Transverse colon (tissue), 4 donors: ENCODE measurements at regions of chr19 and their contacts with region 1.

Region 1: GRCh38 chr19:32570081-32570785 is 10.8 kb upstream of the PDCD5 start:
- DNase-seq: peak; percentile 56
- H3K4me3 ChIP-seq: no peak overlapping the region
- H3K27ac ChIP-seq: no peak overlapping the region
- H3K4me1 ChIP-seq: no peaks in the 10 kb centered on the region
- H3K27me3 ChIP-seq: no peaks in the 10 kb centered on the region
- CTCF ChIP-seq: peak; percentile 53 to 69 (median 57)
- EP300 ChIP-seq: no peak
- POLR2A ChIP-seq: no peak

Region 2: DNA sequence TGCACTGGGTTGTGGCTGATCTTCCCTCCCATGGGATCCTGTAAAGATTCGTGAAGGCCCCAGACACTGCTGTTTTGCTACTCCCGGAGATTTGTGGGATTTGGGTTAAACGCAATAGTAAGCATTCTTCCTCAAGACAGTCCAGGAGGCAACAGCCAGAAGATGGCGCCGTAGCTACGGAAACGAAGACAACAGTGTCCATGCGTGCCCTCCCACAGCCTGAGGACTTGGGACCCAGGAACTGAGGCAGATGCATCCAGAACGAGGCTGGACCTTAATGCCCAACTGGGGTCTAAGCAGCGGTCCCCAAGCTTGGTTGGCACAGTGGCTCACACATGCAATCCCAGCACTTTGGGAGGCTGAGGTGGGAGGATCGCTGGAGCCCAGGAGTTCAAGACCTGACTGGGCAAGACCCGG is 282.4 kb before region 1 on chr19:
- in situ Hi-C with region 1: no loop called
- intact Hi-C with region 1: loop called (anchors 5 kb)
- DNase-seq: peak; percentile 74
- H3K4me3 ChIP-seq: peak overlapping the region in 1 of 4 donors; percentile 20
- H3K27ac ChIP-seq: no peak overlapping the region
- H3K4me1 ChIP-seq: peaks cover 0 to 7% (median 2%) of the 10 kb centered on the region in 4 donors
- H3K27me3 ChIP-seq: peaks cover 7% of the 10 kb centered on the region
- CTCF ChIP-seq: peak; percentile 38 to 52 (median 42)
- EP300 ChIP-seq: no peak
- POLR2A ChIP-seq: no peak

Region 3: GRCh38 chr19:32318880-32319520 is 251.2 kb before region 1 on chr19:
- in situ Hi-C with region 1: loop called in 3 of 4 experiments (anchors 25 kb)
- intact Hi-C with region 1: no loop called
- DNase-seq: no peak
- H3K4me3 ChIP-seq: no peak overlapping the region
- H3K27ac ChIP-seq: no peak overlapping the region
- H3K4me1 ChIP-seq: no peaks in the 10 kb centered on the region
- H3K27me3 ChIP-seq: no peaks in the 10 kb centered on the region
- CTCF ChIP-seq: peak in 4 of 5 experiments; percentile 14 to 19 (median 18)
- EP300 ChIP-seq: no peak
- POLR2A ChIP-seq: no peak

Region 4: DNA sequence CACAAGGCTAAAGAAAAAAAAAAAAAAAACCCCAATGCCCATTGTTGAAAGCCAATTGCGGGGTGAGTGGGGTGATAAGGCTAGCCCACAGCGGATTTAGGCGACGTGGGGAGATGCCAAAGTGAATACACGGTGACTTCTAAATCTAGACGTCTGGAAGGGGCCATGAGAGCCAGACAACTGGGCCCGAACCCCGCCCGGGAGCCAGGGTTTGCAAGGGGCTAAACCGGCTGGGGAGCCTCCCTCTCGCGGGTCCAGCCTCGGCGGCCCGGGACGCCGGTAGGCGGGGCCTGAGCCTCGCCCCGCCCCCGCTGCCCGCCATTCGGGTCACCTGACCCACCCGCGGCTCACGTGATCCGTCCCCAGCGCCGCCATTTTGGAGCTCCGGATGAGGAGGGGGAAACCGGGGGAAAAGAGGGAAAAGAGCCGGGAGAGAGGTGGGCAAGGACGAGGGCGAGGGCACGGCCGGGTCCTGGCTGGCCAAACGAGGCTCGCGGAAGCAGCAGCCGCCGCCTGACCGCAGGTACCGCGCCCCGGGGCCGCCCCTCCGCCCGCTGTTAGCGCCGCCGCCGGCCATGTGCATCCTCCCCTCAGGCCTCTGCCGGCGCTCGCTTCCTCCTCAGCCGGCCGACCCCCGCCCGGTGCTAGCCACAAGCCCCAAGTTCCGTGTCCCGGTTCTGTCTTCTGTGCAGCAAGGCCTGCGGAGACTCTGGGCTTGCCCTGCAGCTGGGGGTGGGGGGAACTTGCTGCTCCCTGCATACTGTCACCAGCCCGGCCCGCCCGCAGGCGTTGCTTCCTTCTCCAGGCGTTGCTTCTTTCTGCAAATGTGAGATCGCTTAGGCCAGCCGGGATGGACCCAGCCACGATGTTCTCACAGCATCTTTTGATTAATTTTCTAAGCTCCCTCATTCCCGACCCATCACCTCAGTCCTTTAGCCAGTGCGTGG is 224.7 kb before region 1 on chr19 and contains the start of gene ZNF507:
- in situ Hi-C with region 1: loop called in 1 of 4 experiments (anchors 25 kb)
- intact Hi-C with region 1: no loop called
- DNase-seq: peak; percentile 85
- H3K4me3 ChIP-seq: peak within 1 kb of the TSS; percentile 74 to 92 (median 90)
- H3K27ac ChIP-seq: peak within 1 kb of the TSS; percentile 86 to 90 (median 86)
- H3K4me1 ChIP-seq: peaks cover 0 to 43% (median 27%) of the 10 kb centered on the region in 4 donors
- H3K27me3 ChIP-seq: peaks cover 6% of the 10 kb centered on the region
- CTCF ChIP-seq: no peak
- EP300 ChIP-seq: no peak
- POLR2A ChIP-seq: no peak
- total RNA-seq, gene ZNF507: 20.3 to 30.0 (median 22.5) TPM

Region 5: GRCh38 chr19:32498648-32499200 is 71.5 kb before region 1 on chr19:
- in situ Hi-C with region 1: no loop called
- intact Hi-C with region 1: loop called (anchors 2 kb)
- DNase-seq: no peak
- H3K4me3 ChIP-seq: no peak overlapping the region
- H3K27ac ChIP-seq: no peak overlapping the region
- H3K4me1 ChIP-seq: no peaks in the 10 kb centered on the region
- H3K27me3 ChIP-seq: no peaks in the 10 kb centered on the region
- CTCF ChIP-seq: no peak
- EP300 ChIP-seq: no peak
- POLR2A ChIP-seq: no peak